Left lung (tissue), 14 donors: ENCODE measurements at regions of chr9 and their contacts with region 1.

Region 1: DNA sequence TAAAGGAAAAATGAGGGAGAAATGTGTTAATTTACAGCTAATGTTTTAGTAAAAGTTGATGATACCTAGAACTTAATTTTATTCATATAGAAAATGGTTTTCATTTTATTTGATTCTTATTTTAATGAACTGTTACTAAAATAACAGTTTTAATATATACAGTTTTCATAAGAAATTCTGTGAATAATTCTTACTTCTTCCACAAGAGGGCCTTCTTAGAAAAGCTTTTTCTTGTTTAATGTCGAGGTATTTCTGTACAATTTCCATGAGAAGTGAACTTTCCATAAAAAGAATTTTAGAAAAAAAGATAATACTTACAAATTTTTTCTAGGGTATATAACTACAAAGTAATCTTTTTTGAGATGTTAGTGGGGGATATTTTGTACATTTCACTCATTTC is 73.9 kb downstream of the KLF9 start:
- DNase-seq: peak in 1 of 4 donors; percentile 24
- ATAC-seq: peak; percentile 33
- H3K4me3 ChIP-seq: no peak overlapping the region
- H3K27ac ChIP-seq: no peak overlapping the region
- H3K4me1 ChIP-seq: no peaks in the 10 kb centered on the region
- H3K27me3 ChIP-seq: no peaks in the 10 kb centered on the region
- CTCF ChIP-seq: peak; percentile 13 to 36

Region 2: GRCh38 chr9:70406434-70406862 is 65.9 kb after region 1 on chr9:
- intact Hi-C with region 1: no loop called
- DNase-seq: no peak
- ATAC-seq: peak; percentile 28
- H3K4me3 ChIP-seq: no peak overlapping the region
- H3K27ac ChIP-seq: peak overlapping the region; percentile 49 to 73
- H3K4me1 ChIP-seq: peaks cover 42 to 92% of the 10 kb centered on the region in 2 donors
- H3K27me3 ChIP-seq: no peaks in the 10 kb centered on the region
- CTCF ChIP-seq: no peak

Region 3: DNA sequence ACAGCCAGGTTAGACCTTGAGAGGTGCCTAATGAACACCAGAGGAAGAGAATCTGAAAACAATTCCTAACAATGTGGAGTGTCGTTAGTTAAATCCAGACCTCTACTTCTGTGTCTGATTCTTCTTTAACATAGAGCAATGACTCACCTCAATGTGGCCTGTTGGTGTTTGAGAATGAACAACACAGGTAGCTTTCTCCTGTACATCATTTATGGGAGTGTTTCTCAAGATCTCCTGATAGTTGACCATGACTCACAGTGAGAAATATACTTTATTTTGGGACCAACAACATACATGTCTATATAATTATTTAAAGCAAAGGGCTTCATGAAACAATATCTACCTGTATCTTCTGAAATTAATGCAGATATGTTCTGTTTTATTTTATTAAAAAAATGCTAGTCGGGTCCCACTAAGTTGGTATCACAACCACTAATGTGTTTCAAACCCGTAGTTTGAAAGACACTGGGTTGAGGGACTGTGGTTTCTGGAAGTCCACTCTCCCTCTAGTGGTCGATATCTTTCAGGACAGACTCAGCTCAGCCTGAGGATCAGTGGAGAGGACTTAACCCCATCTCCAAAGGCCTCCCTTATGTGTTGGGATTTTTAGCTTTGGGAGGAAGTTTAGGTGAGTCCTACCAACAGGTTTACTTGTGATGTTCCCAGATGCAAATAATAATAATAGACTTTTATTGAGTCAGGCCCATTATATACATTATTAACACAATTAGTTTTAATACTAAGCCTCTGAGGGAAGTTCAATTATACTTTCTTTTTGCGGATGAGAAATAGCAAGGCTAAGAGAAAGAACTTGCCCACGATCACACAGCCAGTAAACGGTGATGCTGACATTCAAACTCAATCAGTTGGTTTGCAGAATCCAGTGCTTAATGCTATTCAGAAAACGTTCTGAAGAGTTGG is 143.9 kb after region 1 on chr9:
- intact Hi-C with region 1: no loop called
- DNase-seq: peak in 1 of 4 donors; percentile 52
- ATAC-seq: peak; percentile 77
- H3K4me3 ChIP-seq: no peak overlapping the region
- H3K27ac ChIP-seq: peak overlapping the region; percentile 54 to 70
- H3K4me1 ChIP-seq: peaks cover 47 to 76% of the 10 kb centered on the region in 2 donors
- H3K27me3 ChIP-seq: no peaks in the 10 kb centered on the region
- CTCF ChIP-seq: peak; percentile 79 to 81

Region 4: DNA sequence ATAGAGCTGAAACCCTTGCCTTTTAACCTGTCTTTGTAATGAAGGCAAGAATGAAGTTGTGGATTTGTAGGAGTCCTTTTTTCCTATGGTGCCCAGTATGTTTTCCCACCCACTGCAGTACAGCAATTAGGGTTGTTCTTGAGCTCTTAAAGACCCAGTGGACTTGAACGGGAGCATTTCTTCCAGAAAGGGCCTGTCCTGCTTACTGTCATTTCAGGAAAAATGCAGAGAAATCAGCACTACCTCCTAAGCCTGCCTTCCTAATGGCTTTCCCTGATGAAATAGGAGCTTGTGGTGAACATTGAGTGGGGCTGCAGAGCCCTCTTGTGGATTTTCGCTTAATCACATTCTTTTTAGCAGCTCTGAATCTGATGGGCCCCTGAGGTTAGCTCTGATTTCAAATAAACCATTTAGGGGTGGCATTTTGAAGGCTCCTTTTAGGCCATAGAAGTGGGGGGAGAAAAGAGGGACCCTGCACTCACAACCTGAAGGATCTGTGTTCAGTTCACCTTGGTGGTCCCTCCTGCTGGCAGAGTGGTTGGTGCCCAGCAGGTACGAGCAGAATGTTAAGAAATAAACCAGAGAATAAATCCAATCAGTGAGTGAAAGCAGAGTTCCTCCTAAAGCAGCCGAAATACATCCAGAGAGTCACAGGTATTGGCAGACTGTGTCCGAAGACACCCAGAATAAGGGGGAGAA is 261.9 kb after region 1 on chr9:
- intact Hi-C with region 1: loop called in 1 of 2 experiments (anchors 5 kb)
- DNase-seq: peak in 2 of 4 donors; percentile 73 to 84
- ATAC-seq: peak; percentile 88
- H3K4me3 ChIP-seq: peak overlapping the region in 1 of 2 donors; percentile 2
- H3K27ac ChIP-seq: peak overlapping the region; percentile 73 to 83
- H3K4me1 ChIP-seq: peaks cover 10 to 11% of the 10 kb centered on the region in 2 donors
- H3K27me3 ChIP-seq: no peaks in the 10 kb centered on the region
- CTCF ChIP-seq: peak; percentile 72 to 75